ENCODE measurements at regions of chr9 and their contacts with region 1.

Region 1: GRCh38 chr9:124940693-124941453 is at the start of gene GOLGA1:
- DNase-seq: peak; percentile 91
- H3K4me3 ChIP-seq: peak within 1 kb of the TSS; percentile 79 to 81
- H3K27ac ChIP-seq: peak within 1 kb of the TSS; percentile 96
- H3K4me1 ChIP-seq: no peaks in the 10 kb centered on the region
- H3K27me3 ChIP-seq: no peaks in the 10 kb centered on the region
- CTCF ChIP-seq: peak in 1 of 4 experiments; percentile 21
- POLR2A ChIP-seq: peak; percentile 80
- total RNA-seq, gene GOLGA1: 12.5 to 28.3 TPM

Region 2: DNA sequence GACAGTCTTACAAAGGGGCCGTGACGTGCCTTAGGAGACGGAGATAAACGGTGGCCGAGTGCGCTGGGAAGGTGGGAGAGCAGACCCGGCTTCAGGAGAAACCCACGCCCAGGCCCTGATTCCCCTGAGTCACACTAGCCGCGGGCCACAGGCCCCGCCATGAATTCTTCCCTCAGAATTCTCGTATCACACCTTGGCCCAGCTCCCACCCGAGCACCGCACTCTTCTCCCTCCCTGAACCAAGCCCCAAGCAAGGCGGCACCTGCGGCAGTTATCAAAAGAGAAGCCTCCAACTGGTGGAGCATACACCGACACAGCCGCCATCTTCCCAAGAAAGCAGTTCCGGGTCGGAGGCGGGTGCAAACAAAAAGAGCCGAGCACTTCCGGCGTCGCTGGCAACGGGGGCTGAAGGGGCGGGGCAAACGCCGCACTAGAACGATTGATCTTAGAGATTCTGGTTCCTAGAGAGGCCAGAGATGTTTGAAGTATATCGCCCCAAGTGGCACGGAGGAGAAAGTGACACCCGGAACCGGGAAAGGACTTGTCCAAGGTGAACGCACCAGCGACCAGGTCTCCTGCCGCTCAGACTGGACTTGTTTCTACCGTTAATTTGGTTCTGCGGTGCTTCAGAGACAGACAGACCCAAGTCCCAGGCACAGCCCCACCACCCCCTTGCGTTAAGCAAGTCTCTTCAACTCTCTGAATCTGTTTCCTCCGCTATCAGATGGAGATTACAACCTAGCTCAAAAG is 525.6 kb before region 1 on chr9 and contains the start of gene PSMB7:
- intact Hi-C with region 1: loop called (anchors 10 kb)
- DNase-seq: peak; percentile 93
- H3K4me3 ChIP-seq: peak within 1 kb of the TSS; percentile 60 to 82
- H3K27ac ChIP-seq: peak within 1 kb of the TSS in 1 of 2 donors; percentile 35
- H3K4me1 ChIP-seq: peaks cover 3% of the 10 kb centered on the region
- H3K27me3 ChIP-seq: no peaks in the 10 kb centered on the region
- CTCF ChIP-seq: peak in 3 of 4 experiments; percentile 76 to 84 (median 78)
- POLR2A ChIP-seq: no peak
- total RNA-seq, gene PSMB7: 150 to 158 TPM

Region 3: DNA sequence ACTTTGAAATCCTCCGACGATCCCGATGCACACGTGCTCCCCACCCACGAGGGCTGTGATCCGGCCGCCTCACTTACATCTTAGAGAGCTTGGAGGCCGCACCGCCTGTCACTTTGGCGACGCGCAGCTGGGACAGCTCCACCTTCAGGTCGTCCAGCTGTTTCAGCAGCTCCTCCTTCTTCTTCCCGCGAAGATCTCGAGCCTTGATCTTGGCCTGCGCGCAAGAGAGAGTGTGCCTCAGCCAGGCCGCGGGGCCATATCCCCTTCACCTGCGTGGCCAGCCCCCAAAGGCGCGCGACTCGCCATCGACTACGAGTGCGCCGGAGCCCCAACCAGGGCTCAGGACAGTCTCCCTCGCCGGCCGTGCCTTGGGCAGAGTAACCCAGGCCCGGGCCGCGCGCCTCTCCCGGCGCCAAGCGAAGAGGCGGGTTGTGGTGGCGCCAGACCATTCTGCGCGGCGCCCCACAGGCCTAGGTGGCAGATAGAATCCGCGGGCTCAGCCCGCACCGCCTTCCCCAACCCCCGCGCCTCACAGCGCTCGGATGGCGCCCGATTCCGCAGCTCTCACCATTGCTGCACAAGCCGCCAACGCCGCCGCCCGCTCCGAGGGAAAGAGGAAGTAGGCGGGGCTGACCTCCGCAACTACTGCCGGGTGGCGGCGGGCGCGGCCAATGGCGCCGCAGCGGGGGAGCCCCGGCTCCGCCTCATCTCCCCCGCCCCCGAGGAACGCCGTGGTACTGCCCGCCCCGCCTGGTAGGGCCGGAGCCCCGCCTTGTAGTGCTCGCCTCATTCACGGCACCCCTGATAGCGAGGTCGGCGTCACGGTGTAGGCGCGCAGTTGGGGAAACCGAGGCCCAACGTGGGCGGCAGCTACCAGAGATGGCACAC is 79.3 kb before region 1 on chr9 and contains the starts of genes ARPC5L and RPL35:
- intact Hi-C with region 1: loop called (anchors 10 kb)
- DNase-seq: peak; percentile 94
- H3K4me3 ChIP-seq: peak within 1 kb of the TSS; percentile 71 to 81
- H3K27ac ChIP-seq: peak within 1 kb of the TSS; percentile 67 to 84
- H3K4me1 ChIP-seq: peaks cover 9% of the 10 kb centered on the region
- H3K27me3 ChIP-seq: no peaks in the 10 kb centered on the region
- CTCF ChIP-seq: peak in 3 of 4 experiments; percentile 23 to 45 (median 35)
- POLR2A ChIP-seq: peak; percentile 85
- total RNA-seq, gene ARPC5L: 27.8 to 41.1 TPM
- total RNA-seq, gene RPL35: 1,539 to 2,854 TPM

Region 4: DNA sequence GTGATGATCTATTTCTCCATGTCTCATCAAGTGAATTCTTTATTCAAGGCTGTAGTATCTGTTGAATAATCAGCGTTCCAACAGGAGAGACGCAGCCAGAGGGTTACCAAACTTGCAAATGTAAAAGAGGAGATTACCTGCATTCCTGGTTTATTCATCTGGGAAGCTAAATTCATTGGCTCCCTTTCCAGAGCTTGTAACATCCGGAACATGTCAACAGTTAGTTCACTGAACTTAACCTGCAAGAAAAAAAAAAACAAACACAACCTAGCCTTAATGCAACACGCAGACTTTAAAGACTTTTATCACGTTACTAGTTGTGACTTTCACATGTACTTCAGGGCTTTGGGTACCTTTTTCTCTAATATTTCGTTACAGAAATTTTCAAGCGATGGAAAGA is 62.5 kb after region 1 on chr9:
- intact Hi-C with region 1: no loop called
- DNase-seq: no peak
- H3K4me3 ChIP-seq: no peak overlapping the region
- H3K27ac ChIP-seq: no peak overlapping the region
- H3K4me1 ChIP-seq: no peaks in the 10 kb centered on the region
- H3K27me3 ChIP-seq: no peaks in the 10 kb centered on the region
- CTCF ChIP-seq: no peak
- POLR2A ChIP-seq: no peak

Region 5: GRCh38 chr9:125189361-125190289 is 248.8 kb after region 1 on chr9 and contains the start of gene PPP6C:
- intact Hi-C with region 1: loop called (anchors 5 kb)
- DNase-seq: peak; percentile 95
- H3K4me3 ChIP-seq: peak within 1 kb of the TSS; percentile 86 to 88
- H3K27ac ChIP-seq: peak within 1 kb of the TSS; percentile 82 to 85
- H3K4me1 ChIP-seq: no peaks in the 10 kb centered on the region
- H3K27me3 ChIP-seq: no peaks in the 10 kb centered on the region
- CTCF ChIP-seq: peak; percentile 48 to 91 (median 70)
- POLR2A ChIP-seq: peak; percentile 63
- total RNA-seq, gene PPP6C: 28.8 to 34.1 TPM

Region 6: GRCh38 chr9:125261501-125262293 is 320.8 kb after region 1 on chr9 and contains the start of gene GAPVD1:
- intact Hi-C with region 1: no loop called
- DNase-seq: peak; percentile 74
- H3K4me3 ChIP-seq: peak within 1 kb of the TSS; percentile 63 to 97
- H3K27ac ChIP-seq: peak within 1 kb of the TSS; percentile 75 to 84
- H3K4me1 ChIP-seq: no peaks in the 10 kb centered on the region
- H3K27me3 ChIP-seq: no peaks in the 10 kb centered on the region
- CTCF ChIP-seq: peak in 3 of 4 experiments; percentile 40 to 66 (median 64)
- POLR2A ChIP-seq: peak; percentile 77
- total RNA-seq, gene GAPVD1: 34.4 to 50.1 TPM

Measured in prostate gland (tissue), 2 donors.